ENCODE measurements at regions of chr15 and their contacts with region 1.

Region 1: GRCh38 chr15:99704444-99704838 is 28.8 kb downstream of the LYSMD4 start:
- DNase-seq: peak; percentile 78 to 90
- ATAC-seq: peak; percentile 78 to 95
- H3K4me3 ChIP-seq: no peak overlapping the region
- H3K27ac ChIP-seq: peak overlapping the region in 1 of 2 experiments; percentile 71; a peak in 2 of 6 replicates
- H3K4me1 ChIP-seq: peaks cover 35% of the 10 kb centered on the region
- CTCF ChIP-seq: peak; percentile 84
- EP300 ChIP-seq: no peak
- POLR2A ChIP-seq: no peak
- RAD21 ChIP-seq: peak; percentile 93 to 95

Region 2: DNA sequence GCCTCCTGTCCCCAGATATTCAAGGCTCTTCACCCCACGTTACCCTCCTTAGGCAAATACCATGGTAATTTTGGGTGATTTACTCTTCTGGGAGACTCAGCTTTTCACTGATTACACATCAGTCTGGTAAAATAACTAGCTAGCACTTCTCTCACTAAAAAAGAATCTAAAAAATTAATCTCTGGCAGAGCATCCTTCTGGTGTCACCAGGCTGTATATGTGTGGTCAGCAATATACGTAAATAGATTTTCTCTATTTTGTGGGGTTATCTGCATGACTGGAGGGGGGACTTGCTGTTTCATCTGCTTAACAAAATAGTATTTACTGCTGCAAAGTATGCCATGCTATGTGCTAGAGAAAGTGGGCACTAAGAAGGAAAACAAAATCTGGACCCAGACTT is 408.1 kb before region 1 on chr15:
- CTCF ChIA-PET with region 1: interaction called, 23 read pairs
- POLR2A ChIA-PET with region 1: no interaction called
- DNase-seq: no peak
- ATAC-seq: no peak
- H3K4me3 ChIP-seq: no peak overlapping the region
- H3K27ac ChIP-seq: no peak overlapping the region
- H3K4me1 ChIP-seq: no peaks in the 10 kb centered on the region
- CTCF ChIP-seq: no peak
- EP300 ChIP-seq: no peak
- POLR2A ChIP-seq: no peak
- RAD21 ChIP-seq: no peak

Region 3: DNA sequence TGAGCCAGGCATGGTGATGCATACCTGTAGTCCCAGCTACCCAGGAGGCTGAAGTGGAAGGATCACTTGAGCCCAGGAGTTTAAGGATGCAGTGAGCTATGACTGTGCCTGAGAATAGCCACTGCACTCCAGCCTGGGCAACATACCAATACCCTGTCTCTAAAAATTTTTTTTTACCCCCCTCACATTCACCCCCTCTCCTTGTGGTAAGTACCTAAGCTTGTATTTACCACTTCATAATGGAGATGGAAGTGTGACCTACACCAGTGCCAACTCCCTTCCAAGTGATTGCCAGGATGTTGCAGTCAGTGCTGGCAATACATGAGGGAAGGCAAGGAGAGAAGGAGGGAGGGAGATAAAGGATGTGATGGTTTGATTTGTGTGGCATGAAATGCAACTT is 368.9 kb before region 1 on chr15:
- CTCF ChIA-PET with region 1: interaction called, 13 read pairs
- POLR2A ChIA-PET with region 1: no interaction called
- DNase-seq: no peak
- ATAC-seq: no peak
- H3K4me3 ChIP-seq: no peak overlapping the region
- H3K27ac ChIP-seq: no peak overlapping the region
- H3K4me1 ChIP-seq: peaks cover 16% of the 10 kb centered on the region
- CTCF ChIP-seq: no peak
- EP300 ChIP-seq: no peak
- POLR2A ChIP-seq: no peak
- RAD21 ChIP-seq: no peak

Region 4: DNA sequence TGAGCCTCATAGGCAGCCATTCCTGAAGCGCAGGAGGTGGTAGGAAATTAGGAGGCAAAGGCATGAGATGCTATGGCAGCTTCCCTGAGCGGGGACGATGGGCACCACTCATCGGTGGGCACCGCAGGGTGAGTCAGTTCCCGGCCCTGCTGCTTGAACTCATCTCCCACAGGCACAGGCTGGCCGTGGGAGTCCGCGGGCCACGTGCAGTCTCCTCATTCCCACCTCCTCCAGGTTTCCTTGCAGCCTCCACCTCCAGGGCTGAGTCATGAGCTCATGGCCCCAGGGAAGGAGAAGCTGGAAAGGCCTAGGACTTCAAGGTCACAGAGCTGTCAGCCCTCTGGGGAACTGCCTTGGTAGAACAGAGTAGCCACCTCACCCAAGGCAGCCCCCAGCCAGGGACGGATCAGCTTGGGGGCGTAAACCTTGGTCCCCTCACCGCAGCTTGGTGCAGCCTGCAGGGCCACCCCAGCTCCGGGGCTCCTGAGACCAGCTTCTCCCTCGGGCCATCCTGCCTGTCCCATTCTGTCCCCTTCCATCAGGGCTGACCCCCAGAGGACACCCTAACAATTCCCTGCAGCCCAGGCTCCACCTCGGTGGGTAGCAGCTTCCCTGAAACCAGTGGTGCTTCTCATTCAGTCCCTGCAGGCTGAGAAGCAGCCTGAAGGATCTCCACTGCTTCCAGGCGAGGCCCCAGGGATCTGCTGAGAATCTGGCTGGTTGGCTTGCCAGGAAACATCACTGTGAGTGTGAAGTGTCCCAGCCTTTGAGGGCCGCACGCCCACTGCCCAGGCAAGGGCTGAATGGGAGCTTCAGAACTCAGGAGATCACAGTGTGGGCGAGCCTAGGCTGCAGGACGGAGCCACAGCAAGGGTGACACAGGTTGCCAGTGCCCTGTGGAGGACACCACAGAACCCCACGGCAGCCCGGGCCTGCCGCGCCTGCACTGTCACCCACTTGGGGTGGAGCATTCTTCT is 289.4 kb before region 1 on chr15:
- CTCF ChIA-PET with region 1: interaction called, 94 read pairs
- POLR2A ChIA-PET with region 1: no interaction called
- DNase-seq: no peak
- ATAC-seq: peak; percentile 21 to 22; a peak in 3 of 6 replicates
- H3K4me3 ChIP-seq: no peak overlapping the region
- H3K27ac ChIP-seq: no peak overlapping the region
- H3K4me1 ChIP-seq: peaks cover 4% of the 10 kb centered on the region; the same call in 1 of the 3 replicates
- CTCF ChIP-seq: no peak
- EP300 ChIP-seq: no peak
- POLR2A ChIP-seq: no peak
- RAD21 ChIP-seq: no peak

Region 5: DNA sequence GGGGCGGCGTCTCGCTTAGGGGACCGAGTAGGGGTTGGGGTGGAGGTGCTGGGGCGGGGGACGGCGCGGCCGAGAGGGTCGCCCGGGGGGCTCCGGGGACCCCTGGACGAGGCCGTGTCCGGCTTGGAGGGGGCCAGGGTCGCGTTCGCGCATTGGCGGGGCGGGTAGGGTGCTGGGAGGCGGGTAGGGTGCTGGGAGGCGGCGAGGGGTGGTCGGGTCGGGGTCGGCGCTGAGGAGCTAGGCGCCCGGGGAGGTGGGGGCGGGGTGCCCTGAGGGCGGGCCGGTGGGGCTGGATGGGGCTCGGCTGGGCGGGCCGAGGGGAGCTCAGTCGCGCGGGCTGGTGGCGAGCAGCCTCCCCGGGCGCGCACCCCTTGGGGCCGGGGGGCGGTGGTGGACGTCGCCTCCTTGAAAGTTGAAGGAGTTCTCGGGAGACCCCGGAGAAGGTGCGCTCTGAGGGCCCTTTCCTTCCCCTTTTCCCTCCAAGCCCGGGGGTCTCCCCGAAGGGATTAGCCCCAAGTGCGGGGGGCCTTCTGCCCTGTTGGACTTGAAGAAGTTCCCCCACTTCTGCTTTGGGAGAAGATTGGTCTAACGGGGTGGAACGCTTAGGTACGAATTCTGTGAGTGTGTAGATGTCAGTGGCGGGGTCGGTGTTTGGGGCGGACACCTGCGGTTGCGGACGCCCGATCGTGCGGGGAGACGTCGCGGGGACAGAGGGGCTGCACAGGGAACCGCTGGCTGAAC is 138.1 kb before region 1 on chr15:
- CTCF ChIA-PET with region 1: interaction called, 12 read pairs
- POLR2A ChIA-PET with region 1: interaction called, 5 read pairs
- DNase-seq: no peak
- ATAC-seq: peak; percentile 6 to 49; a peak in 4 of 6 replicates
- H3K4me3 ChIP-seq: peak overlapping the region; percentile 64
- H3K27ac ChIP-seq: peak overlapping the region; percentile 93
- H3K4me1 ChIP-seq: peaks cover 23% of the 10 kb centered on the region; the same call in 2 of the 3 replicates
- CTCF ChIP-seq: no peak
- EP300 ChIP-seq: no peak; a peak in 1 of 5 replicates
- POLR2A ChIP-seq: no peak
- RAD21 ChIP-seq: no peak

Region 6: GRCh38 chr15:99719096-99719541 is 14.7 kb after region 1 on chr15:
- CTCF ChIA-PET with region 1: interaction called, 78 read pairs
- POLR2A ChIA-PET with region 1: no interaction called
- DNase-seq: no peak
- ATAC-seq: no peak
- H3K4me3 ChIP-seq: no peak overlapping the region
- H3K27ac ChIP-seq: no peak overlapping the region
- H3K4me1 ChIP-seq: no peaks in the 10 kb centered on the region
- CTCF ChIP-seq: no peak
- EP300 ChIP-seq: no peak
- POLR2A ChIP-seq: no peak
- RAD21 ChIP-seq: no peak

Measured in A549 (cell line).